T-cell (primary cell): ENCODE measurements at regions of chr4 and their contacts with region 1.

Region 1: DNA sequence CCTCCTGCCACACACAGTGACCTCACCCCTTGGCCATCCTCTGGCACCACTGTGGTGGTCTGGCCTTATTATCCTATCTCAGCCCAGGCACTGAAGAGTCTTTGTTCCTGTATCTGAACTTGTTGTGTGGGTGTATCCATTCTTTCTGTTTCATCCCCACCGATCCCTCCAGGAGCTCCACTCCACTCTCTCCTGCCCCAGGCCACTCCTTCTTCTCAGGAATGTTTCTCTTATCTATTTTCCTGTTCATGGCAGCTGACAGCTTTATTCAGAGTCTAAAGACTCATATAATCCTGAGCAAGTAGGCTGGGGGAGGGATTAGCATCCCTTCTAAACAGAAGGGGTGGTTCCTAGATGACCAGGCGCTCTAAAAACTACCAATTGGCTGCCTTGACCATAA is 150.0 kb downstream of the ANAPC10 start:
- DNase-seq: no peak
- ATAC-seq: no peak
- H3K4me3 ChIP-seq: no peak overlapping the region
- H3K4me3 Mint-ChIP-seq: no peak overlapping the region
- H3K27ac ChIP-seq: no peak overlapping the region
- H3K27ac Mint-ChIP-seq: no peak overlapping the region
- H3K4me1 ChIP-seq: no peaks in the 10 kb centered on the region
- H3K4me1 Mint-ChIP-seq: no peaks in the 10 kb centered on the region
- H3K27me3 ChIP-seq: peaks cover 0 to 4% of the 10 kb centered on the region in 2 experiments
- H3K27me3 Mint-ChIP-seq: no peaks in the 10 kb centered on the region

Region 2: GRCh38 chr4:145041378-145041777 is 93.4 kb after region 1 on chr4:
- CTCF ChIA-PET with region 1: no interaction called
- POLR2A ChIA-PET with region 1: interaction called in 1 of 2 experiments, 10 read pairs
- DNase-seq: no peak
- ATAC-seq: no peak
- H3K4me3 ChIP-seq: no peak overlapping the region
- H3K4me3 Mint-ChIP-seq: no peak overlapping the region
- H3K27ac ChIP-seq: no peak overlapping the region
- H3K27ac Mint-ChIP-seq: no peak overlapping the region
- H3K4me1 ChIP-seq: no peaks in the 10 kb centered on the region
- H3K4me1 Mint-ChIP-seq: peaks cover 6% of the 10 kb centered on the region in 3 donors
- H3K27me3 ChIP-seq: no peaks in the 10 kb centered on the region
- H3K27me3 Mint-ChIP-seq: no peaks in the 10 kb centered on the region

Region 3: GRCh38 chr4:145125396-145125795 is 177.4 kb after region 1 on chr4:
- CTCF ChIA-PET with region 1: no interaction called
- POLR2A ChIA-PET with region 1: no interaction called
- DNase-seq: no peak
- ATAC-seq: no peak
- H3K4me3 ChIP-seq: no peak overlapping the region
- H3K4me3 Mint-ChIP-seq: peak overlapping the region in 1 of 3 donors; percentile 17
- H3K27ac ChIP-seq: peak overlapping the region; percentile 75
- H3K27ac Mint-ChIP-seq: peak overlapping the region; percentile 64 to 89
- H3K4me1 ChIP-seq: peaks cover 0 to 5% of the 10 kb centered on the region in 2 experiments
- H3K4me1 Mint-ChIP-seq: peaks cover 0 to 18% (median 17%) of the 10 kb centered on the region in 3 donors
- H3K27me3 ChIP-seq: no peaks in the 10 kb centered on the region
- H3K27me3 Mint-ChIP-seq: no peaks in the 10 kb centered on the region